Caco-2 (cell line): ENCODE measurements at regions of chr6 and their contacts with region 1.

Region 1: DNA sequence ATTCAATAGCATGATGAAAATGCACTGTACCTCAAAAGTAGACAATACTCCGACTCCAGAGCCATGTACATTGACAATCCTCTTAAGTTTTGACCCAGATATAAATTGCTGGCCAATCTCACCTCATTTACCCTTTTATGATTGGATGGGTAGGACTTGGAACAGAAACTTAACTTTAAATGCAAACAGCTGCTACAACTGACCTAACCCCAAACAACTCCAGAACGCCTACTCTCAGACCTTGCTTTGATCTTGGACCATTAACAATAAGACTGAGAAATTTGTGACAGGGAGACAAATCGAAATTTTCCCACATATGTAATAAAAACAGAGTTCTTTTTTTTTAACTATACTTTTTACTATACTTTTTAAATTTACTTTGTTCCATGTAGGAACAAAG is 200.5 kb upstream of the MCHR2 start:
- DNase-seq: no peak
- H3K4me3 ChIP-seq: no peak overlapping the region
- H3K4me3 Mint-ChIP-seq: no peak overlapping the region
- H3K27ac Mint-ChIP-seq: no peak overlapping the region
- H3K4me1 ChIP-seq: no peaks in the 10 kb centered on the region
- H3K4me1 Mint-ChIP-seq: no peaks in the 10 kb centered on the region
- H3K27me3 ChIP-seq: no peaks in the 10 kb centered on the region
- H3K27me3 Mint-ChIP-seq: no peaks in the 10 kb centered on the region
- CTCF ChIP-seq: no peak

Region 2: GRCh38 chr6:100228831-100229641 is 34.5 kb after region 1 on chr6:
- CTCF ChIA-PET with region 1: no interaction called
- POLR2A ChIA-PET with region 1: no interaction called
- intact Hi-C with region 1: loop called (anchors 5 kb)
- DNase-seq: peak; percentile 83 to 87
- H3K4me3 ChIP-seq: peak overlapping the region; percentile 41
- H3K4me3 Mint-ChIP-seq: peak overlapping the region; percentile 78
- H3K27ac Mint-ChIP-seq: peak overlapping the region; percentile 42
- H3K4me1 ChIP-seq: peaks cover 29% of the 10 kb centered on the region
- H3K4me1 Mint-ChIP-seq: peaks cover 7% of the 10 kb centered on the region
- H3K27me3 ChIP-seq: no peaks in the 10 kb centered on the region
- H3K27me3 Mint-ChIP-seq: no peaks in the 10 kb centered on the region
- CTCF ChIP-seq: no peak